ENCODE measurements at regions of chr1 and their contacts with region 1.

Region 1: GRCh38 chr1:62082456-62083363 is 111.9 kb upstream of the L1TD1 start:
- DNase-seq: peak; percentile 18 to 29
- ATAC-seq: peak; percentile 84 to 85; a peak in 5 of 6 replicates
- H3K4me3 ChIP-seq: no peak overlapping the region
- H3K27ac ChIP-seq: no peak overlapping the region
- H3K4me1 ChIP-seq: no peaks in the 10 kb centered on the region
- CTCF ChIP-seq: peak; percentile 74
- EP300 ChIP-seq: no peak
- POLR2A ChIP-seq: no peak
- RAD21 ChIP-seq: peak; percentile 28 to 39; a peak in 4 of 5 replicates

Region 2: DNA sequence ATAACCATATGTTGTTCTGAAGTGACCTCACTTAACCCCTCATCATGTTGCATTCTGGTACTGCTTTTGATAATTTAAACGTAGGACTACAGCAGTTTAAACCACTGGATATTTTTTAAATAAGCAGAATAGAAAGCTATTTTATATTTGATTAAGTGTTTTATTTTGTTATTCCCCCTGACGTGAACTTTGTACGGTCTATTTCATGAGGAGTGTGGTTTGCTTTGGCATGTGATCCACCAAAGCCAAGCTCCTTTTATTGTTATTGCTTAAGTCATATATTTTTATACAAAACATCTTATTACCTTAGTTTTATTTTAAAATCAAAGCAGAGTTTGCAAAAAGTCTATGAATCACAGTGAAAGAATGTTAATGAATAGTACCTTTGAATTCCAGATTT is 10.6 kb after region 1 on chr1:
- CTCF ChIA-PET with region 1: interaction called, 15 read pairs
- POLR2A ChIA-PET with region 1: no interaction called
- DNase-seq: no peak
- ATAC-seq: no peak
- H3K4me3 ChIP-seq: no peak overlapping the region
- H3K27ac ChIP-seq: no peak overlapping the region
- H3K4me1 ChIP-seq: no peaks in the 10 kb centered on the region
- CTCF ChIP-seq: no peak
- EP300 ChIP-seq: no peak
- POLR2A ChIP-seq: no peak
- RAD21 ChIP-seq: no peak

Region 3: DNA sequence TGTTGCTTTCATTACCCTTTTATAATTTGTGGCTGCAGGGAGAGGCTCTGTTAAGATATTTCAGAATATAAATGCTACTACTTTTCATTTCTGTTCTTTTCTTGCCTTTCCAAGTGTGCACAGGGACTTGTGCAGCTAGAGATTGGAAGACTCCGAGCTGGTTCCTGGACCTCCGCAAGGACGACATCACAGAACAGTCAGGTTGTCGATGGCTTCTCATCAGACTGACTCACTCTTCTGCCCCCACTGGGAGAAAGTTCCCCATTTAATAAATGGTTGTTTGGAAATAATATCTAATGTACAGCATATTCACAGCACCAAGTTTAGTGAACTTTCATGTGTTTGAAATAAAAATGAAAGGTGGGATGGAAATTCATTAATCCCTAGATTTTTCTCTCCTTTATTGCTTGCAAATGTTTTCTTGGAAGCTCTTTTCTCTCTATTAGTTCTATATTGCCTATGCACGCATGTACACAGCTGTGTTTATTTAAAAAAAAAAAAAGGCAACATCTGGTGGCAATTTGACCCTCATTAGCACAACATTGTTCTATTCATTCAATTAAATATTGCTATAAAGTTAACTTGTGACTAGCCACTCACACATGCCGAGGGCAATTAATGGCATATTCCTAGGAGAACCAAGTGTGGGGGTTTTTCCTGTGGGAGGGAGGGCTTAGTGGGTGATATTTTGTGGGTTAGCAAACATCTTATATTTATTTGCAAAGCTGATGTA is 34.5 kb after region 1 on chr1:
- CTCF ChIA-PET with region 1: interaction called, 10 read pairs
- POLR2A ChIA-PET with region 1: no interaction called
- DNase-seq: no peak
- ATAC-seq: no peak
- H3K4me3 ChIP-seq: no peak overlapping the region
- H3K27ac ChIP-seq: no peak overlapping the region
- H3K4me1 ChIP-seq: peaks cover 7% of the 10 kb centered on the region
- CTCF ChIP-seq: no peak
- EP300 ChIP-seq: no peak
- POLR2A ChIP-seq: no peak
- RAD21 ChIP-seq: no peak

Region 4: DNA sequence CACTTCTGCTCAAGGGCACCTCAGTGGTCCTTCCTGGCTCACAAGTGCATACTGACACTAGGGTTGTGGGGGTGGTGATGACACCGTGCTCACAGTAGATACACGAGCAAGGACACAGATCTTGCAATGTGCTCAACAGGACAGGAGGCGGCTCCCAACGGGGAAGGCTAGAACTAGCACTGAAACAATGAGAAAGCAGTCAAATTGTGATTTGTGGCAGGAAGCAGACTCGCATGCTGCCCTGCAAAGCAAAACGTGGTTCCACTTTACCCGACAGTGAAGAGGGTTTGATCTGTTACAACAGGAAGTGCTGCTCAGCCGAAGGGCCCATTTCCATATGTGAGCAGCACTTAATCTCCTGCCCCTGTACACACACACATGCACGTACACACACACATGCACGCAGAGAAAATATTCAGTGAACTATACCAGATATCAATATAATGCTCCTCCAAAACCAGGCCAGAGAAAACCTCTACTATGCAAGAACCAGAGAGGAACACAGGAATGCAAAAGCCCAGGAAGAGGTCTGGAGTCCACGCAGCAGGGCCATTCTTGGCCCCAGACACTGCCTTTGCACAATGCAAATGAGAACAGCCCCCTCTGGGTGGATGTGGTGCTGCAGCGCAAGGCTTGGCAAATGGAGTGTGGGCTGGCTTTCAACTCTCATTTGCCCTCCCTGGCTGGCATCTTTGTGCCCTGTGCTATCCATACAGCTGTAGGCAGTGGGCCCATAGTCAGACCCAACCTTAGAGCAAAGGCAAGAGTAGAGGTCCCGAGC is 189.4 kb after region 1 on chr1:
- CTCF ChIA-PET with region 1: no interaction called
- POLR2A ChIA-PET with region 1: no interaction called
- DNase-seq: no peak
- ATAC-seq: peak; percentile 34 to 61; a peak in 3 of 6 replicates
- H3K4me3 ChIP-seq: no peak overlapping the region
- H3K27ac ChIP-seq: no peak overlapping the region
- H3K4me1 ChIP-seq: 0 out of 3 replicates have a peak, but pooled peaks cover 7% of the 10 kb centered on the region
- CTCF ChIP-seq: no peak
- EP300 ChIP-seq: no peak
- POLR2A ChIP-seq: no peak
- RAD21 ChIP-seq: no peak

Measured in A549 (cell line).